ENCODE measurements at regions of chr3 and their contacts with region 1.

Region 1: GRCh38 chr3:111610189-111610588 is 15.0 kb upstream of the ZBED2 start:
- DNase-seq: no peak
- H3K4me3 Mint-ChIP-seq: peak overlapping the region; percentile 50
- H3K27ac Mint-ChIP-seq: peak overlapping the region; percentile 92
- H3K4me1 Mint-ChIP-seq: peaks cover 96% of the 10 kb centered on the region
- H3K27me3 Mint-ChIP-seq: no peaks in the 10 kb centered on the region

Region 2: DNA sequence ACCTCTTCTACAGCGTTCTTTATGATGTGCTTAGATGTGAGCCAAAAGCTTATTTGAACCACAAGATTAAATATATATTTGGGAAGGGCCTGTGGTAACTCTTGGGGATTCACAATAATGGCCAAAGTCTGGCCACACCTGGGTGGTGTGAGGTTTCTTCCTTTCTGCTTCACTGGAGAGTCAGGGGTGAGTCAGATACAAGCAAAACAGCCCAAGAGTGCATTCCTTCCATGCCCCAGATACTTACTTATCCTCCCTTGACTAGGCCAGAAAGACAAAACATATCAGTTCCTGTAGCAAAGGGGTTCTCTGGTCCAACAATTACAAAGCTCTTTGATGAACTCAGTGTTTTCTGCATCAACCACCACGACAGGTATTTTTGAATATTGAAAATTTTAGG is 16.0 kb before region 1 on chr3:
- CTCF ChIA-PET with region 1: interaction called, 80 read pairs
- POLR2A ChIA-PET with region 1: interaction called, 161 read pairs
- intact Hi-C with region 1: no loop called
- DNase-seq: no peak
- H3K4me3 Mint-ChIP-seq: peak overlapping the region; percentile 86
- H3K27ac Mint-ChIP-seq: peak overlapping the region; percentile 97
- H3K4me1 Mint-ChIP-seq: peaks cover 57% of the 10 kb centered on the region
- H3K27me3 Mint-ChIP-seq: peaks cover 2% of the 10 kb centered on the region

Region 3: DNA sequence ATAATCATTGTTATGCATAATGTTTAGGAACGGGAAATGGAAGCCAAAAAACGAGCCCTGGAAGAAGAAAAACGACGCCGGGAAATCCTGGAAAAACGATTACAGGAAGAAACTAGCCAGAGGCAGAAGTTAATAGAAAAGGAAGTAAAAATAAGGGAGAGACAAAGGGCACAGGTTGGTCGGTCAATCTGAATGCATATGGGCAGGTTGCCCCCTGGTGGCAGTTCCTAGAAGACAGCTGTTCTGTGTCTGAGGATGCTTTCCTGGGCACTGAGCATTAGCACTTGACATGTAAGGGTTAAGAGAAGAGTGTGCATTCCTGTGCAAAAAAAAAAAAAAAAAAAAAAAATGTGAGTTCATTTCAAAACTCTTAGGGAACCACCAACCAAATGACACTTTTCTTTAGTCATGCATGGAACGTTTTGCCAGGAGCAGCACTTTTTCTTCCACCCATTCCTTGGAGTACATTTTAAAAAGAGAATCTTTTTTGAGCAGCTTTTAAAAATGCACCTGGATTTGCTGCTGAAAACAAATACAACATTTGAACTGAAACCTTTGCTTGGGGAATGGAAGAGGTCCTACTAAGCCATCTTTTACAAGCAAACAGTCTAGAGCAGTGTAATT is 357.6 kb after region 1 on chr3:
- CTCF ChIA-PET with region 1: no interaction called
- POLR2A ChIA-PET with region 1: no interaction called
- intact Hi-C with region 1: no loop called
- DNase-seq: peak; percentile 87
- H3K4me3 Mint-ChIP-seq: no peak overlapping the region
- H3K27ac Mint-ChIP-seq: no peak overlapping the region
- H3K4me1 Mint-ChIP-seq: peaks cover 21% of the 10 kb centered on the region
- H3K27me3 Mint-ChIP-seq: no peaks in the 10 kb centered on the region

Measured in activated CD4-positive, alpha-beta memory T cell treated with anti-CD3 and anti-CD28 coated beads for 36 hours (primary cell).